ENCODE measurements at regions of chr17 and their contacts with region 1.

Region 1: DNA sequence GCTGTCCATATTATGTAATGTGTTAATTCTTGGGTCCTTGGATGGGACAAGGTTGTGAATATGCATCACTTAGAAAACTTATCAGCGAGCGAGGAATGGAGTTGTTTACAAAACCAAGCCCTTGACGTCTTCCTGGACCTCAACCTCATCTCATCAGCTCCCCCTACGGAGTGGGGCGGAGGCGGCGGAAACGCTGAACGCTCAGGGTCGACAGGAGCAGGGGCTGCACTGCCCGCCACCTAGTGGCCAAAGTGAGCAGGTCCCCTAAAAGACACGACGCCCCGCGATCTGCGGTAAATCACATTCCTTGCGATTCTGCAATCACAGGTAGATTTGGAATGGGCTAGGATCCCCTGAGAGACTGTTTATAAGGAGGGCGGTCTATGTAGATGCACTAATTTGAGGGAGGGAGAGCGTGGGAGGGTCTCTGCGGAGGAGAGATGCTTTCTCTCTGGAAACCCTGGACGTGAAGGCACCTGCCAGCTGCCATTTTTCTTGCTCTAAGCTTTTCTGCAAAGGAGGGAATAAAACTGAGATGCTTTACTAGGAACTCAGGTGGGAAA is 5.4 kb upstream of the ICAM2 start:
- DNase-seq: peak; percentile 96
- H3K4me3 Mint-ChIP-seq: peak overlapping the region; percentile 56
- H3K27ac Mint-ChIP-seq: peak overlapping the region; percentile 92
- H3K4me1 Mint-ChIP-seq: peaks cover 75% of the 10 kb centered on the region
- H3K27me3 Mint-ChIP-seq: no peaks in the 10 kb centered on the region

Region 2: DNA sequence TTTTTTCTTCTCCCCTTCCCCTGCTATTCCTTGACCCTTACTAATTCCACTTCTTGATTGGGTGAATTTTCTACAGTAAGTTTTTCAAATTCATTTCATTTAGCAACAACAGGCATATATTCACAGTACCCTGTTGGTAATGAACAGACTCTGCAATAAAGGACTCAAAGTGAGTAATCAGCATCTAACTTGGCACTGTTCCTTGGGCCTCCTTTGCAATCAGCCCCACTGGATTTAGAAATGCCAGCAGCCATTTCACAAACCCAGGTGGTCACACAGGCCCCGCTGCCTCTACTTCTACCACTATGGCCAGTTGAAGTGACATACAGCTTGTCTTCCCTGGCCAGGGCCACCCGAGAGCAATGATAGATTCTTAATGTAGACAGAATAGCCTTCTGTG is 693.5 kb before region 1 on chr17:
- CTCF ChIA-PET with region 1: no interaction called
- DNase-seq: no peak
- H3K4me3 Mint-ChIP-seq: no peak overlapping the region
- H3K27ac Mint-ChIP-seq: no peak overlapping the region
- H3K4me1 Mint-ChIP-seq: no peaks in the 10 kb centered on the region
- H3K27me3 Mint-ChIP-seq: no peaks in the 10 kb centered on the region

Region 3: GRCh38 chr17:63919311-63919723 is 106.5 kb before region 1 on chr17:
- CTCF ChIA-PET with region 1: interaction called, 68 read pairs
- DNase-seq: peak; percentile 83
- H3K4me3 Mint-ChIP-seq: no peak overlapping the region
- H3K27ac Mint-ChIP-seq: no peak overlapping the region
- H3K4me1 Mint-ChIP-seq: peaks cover 9% of the 10 kb centered on the region
- H3K27me3 Mint-ChIP-seq: peaks cover 61% of the 10 kb centered on the region

Region 4: GRCh38 chr17:63984651-63985386 is 41.0 kb before region 1 on chr17:
- CTCF ChIA-PET with region 1: interaction called, 12 read pairs
- DNase-seq: peak; percentile 76
- H3K4me3 Mint-ChIP-seq: peak overlapping the region; percentile 9
- H3K27ac Mint-ChIP-seq: peak overlapping the region; percentile 78
- H3K4me1 Mint-ChIP-seq: peaks cover 29% of the 10 kb centered on the region
- H3K27me3 Mint-ChIP-seq: peaks cover 12% of the 10 kb centered on the region

Region 5: DNA sequence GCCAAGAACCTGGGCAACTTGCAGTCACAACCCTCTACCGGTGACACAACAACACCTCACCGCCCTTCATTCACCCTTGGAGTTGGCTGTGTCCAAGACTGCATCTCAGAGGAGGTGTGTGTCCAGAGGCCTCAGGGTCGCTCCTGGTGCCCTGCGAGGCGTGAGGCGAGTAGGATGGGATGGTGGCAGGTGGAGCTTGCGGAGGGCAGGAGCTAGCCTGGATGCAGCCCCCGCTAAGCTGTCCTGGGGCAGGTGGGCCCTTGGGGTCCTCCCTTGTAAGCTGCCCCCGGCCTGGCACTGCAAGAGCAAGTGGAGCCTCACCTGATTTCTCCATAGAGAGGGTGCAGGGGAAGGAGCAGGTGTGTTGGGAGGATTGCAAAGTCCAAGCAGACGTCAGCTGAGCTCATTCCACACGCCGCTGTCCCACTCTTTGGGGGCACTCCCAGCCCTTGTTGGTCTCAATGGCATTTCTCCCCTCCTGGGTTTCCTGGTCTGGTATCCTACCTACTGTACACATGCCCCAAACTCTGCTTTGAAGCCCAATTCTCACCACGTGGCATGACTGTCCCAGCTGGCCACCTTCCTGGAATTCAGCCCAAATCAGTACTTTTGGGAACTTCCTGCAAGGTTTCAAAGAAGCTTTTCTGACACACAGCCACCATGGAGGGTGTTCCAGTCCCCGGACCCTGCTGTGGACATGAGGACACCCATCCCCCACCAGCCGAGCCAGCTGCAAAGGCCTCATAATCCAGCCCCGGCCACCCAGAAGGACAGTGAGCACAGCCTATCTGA is 12.7 kb after region 1 on chr17:
- CTCF ChIA-PET with region 1: interaction called, 18 read pairs
- DNase-seq: peak; percentile 16
- H3K4me3 Mint-ChIP-seq: no peak overlapping the region
- H3K27ac Mint-ChIP-seq: no peak overlapping the region
- H3K4me1 Mint-ChIP-seq: peaks cover 5% of the 10 kb centered on the region
- H3K27me3 Mint-ChIP-seq: no peaks in the 10 kb centered on the region

Region 6: GRCh38 chr17:64063766-64064224 is 38.0 kb after region 1 on chr17:
- CTCF ChIA-PET with region 1: interaction called, 53 read pairs
- DNase-seq: peak; percentile 76
- H3K4me3 Mint-ChIP-seq: no peak overlapping the region
- H3K27ac Mint-ChIP-seq: peak overlapping the region; percentile 29
- H3K4me1 Mint-ChIP-seq: peaks cover 79% of the 10 kb centered on the region
- H3K27me3 Mint-ChIP-seq: no peaks in the 10 kb centered on the region